ENCODE measurements at regions of chr1 and their contacts with region 1.

Region 1: GRCh38 chr1:24970926-24971875 is 41.1 kb upstream of the RUNX3 start:
- DNase-seq: no peak
- ATAC-seq: peak in 2 of 3 donors; percentile 27 to 28
- H3K4me3 ChIP-seq: no peak overlapping the region
- H3K4me3 Mint-ChIP-seq: no peak overlapping the region
- H3K27ac ChIP-seq: no peak overlapping the region
- H3K27ac Mint-ChIP-seq: peak overlapping the region in 1 of 2 donors; percentile 38
- H3K4me1 ChIP-seq: peaks cover 33% of the 10 kb centered on the region
- H3K4me1 Mint-ChIP-seq: peaks cover 8 to 21% of the 10 kb centered on the region in 2 donors
- H3K27me3 ChIP-seq: no peaks in the 10 kb centered on the region
- H3K27me3 Mint-ChIP-seq: peaks cover 35% of the 10 kb centered on the region in 2 donors
- CTCF ChIP-seq: no peak

Region 2: GRCh38 chr1:24861821-24862727 is 109.1 kb before region 1 on chr1:
- intact Hi-C with region 1: no loop called
- DNase-seq: no peak
- ATAC-seq: peak; percentile 21 to 68 (median 43)
- H3K4me3 ChIP-seq: no peak overlapping the region
- H3K4me3 Mint-ChIP-seq: peak overlapping the region; percentile 82
- H3K27ac ChIP-seq: peak overlapping the region; percentile 63
- H3K27ac Mint-ChIP-seq: peak overlapping the region; percentile 81 to 86
- H3K4me1 ChIP-seq: peaks cover 80% of the 10 kb centered on the region
- H3K4me1 Mint-ChIP-seq: peaks cover 66 to 69% of the 10 kb centered on the region in 2 donors
- H3K27me3 ChIP-seq: no peaks in the 10 kb centered on the region
- H3K27me3 Mint-ChIP-seq: no peaks in the 10 kb centered on the region
- CTCF ChIP-seq: no peak

Region 3: GRCh38 chr1:25006770-25007169 is 35.6 kb after region 1 on chr1:
- intact Hi-C with region 1: loop called (anchors 1 kb)
- DNase-seq: no peak
- ATAC-seq: no peak
- H3K4me3 ChIP-seq: no peak overlapping the region
- H3K4me3 Mint-ChIP-seq: peak overlapping the region; percentile 21
- H3K27ac ChIP-seq: no peak overlapping the region
- H3K27ac Mint-ChIP-seq: peak overlapping the region in 1 of 2 donors; percentile 42
- H3K4me1 ChIP-seq: peaks cover 63% of the 10 kb centered on the region
- H3K4me1 Mint-ChIP-seq: peaks cover 20 to 47% of the 10 kb centered on the region in 2 donors
- H3K27me3 ChIP-seq: no peaks in the 10 kb centered on the region
- H3K27me3 Mint-ChIP-seq: peaks cover 11 to 16% of the 10 kb centered on the region in 2 donors
- CTCF ChIP-seq: no peak

Measured in natural killer cell (primary cell).